Activated T-helper 1 cell treated with anti-CD3 and anti-CD28 coated beads, Interleukin-12 subunit alpha, Interleukin-12 subunit beta, Interleukin-2, Interleukin-4 antibody, amounts not matched to agents 30 ng/mL and 10 ng/mL and 1 ng/mL, durations not matched to agents 14 hours and 24 hours and 36 hours (primary cell): ENCODE measurements at regions of chr18 and their contacts with region 1.

Region 1: GRCh38 chr18:36015629-36016028 is 43.1 kb downstream of the RMP24 start:
- DNase-seq: no peak
- H3K4me3 Mint-ChIP-seq: no peak overlapping the region
- H3K27ac Mint-ChIP-seq: no peak overlapping the region
- H3K4me1 Mint-ChIP-seq: no peaks in the 10 kb centered on the region
- H3K27me3 Mint-ChIP-seq: no peaks in the 10 kb centered on the region

Region 2: GRCh38 chr18:35526476-35527120 is 489.0 kb before region 1 on chr18:
- intact Hi-C with region 1: no loop called
- DNase-seq: no peak
- H3K4me3 Mint-ChIP-seq: no peak overlapping the region
- H3K27ac Mint-ChIP-seq: no peak overlapping the region
- H3K4me1 Mint-ChIP-seq: peaks cover 11% of the 10 kb centered on the region
- H3K27me3 Mint-ChIP-seq: peaks cover 6% of the 10 kb centered on the region

Region 3: DNA sequence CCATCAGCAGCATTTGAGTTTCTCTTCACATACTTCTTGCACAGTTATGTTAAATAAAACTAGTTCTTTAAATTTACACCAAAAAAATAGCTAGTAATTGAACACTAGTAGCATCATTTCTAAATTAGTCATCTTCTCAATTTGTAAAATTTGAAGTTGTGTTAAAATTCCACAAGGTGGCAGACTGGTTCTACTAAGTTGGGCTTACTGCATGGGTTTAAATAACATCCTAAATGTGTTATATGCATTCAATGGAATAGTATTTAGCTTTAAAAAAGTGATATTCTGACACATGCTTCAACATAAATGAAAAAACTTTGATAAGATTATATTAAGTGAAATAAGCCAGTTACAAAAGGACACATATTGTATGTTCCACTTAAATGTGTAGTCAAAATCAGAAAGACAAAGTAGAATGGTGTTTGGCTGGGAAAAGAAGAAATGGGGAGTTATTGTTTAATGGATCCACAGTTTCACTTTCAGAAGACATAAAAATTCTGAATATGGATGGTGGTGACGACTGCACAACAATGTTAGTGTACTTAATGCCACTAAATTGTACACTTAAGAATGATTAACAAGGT is 80.4 kb after region 1 on chr18:
- intact Hi-C with region 1: loop called (anchors 1 kb)
- DNase-seq: no peak
- H3K4me3 Mint-ChIP-seq: no peak overlapping the region
- H3K27ac Mint-ChIP-seq: no peak overlapping the region
- H3K4me1 Mint-ChIP-seq: peaks cover 7% of the 10 kb centered on the region
- H3K27me3 Mint-ChIP-seq: peaks cover 14% of the 10 kb centered on the region

Region 4: DNA sequence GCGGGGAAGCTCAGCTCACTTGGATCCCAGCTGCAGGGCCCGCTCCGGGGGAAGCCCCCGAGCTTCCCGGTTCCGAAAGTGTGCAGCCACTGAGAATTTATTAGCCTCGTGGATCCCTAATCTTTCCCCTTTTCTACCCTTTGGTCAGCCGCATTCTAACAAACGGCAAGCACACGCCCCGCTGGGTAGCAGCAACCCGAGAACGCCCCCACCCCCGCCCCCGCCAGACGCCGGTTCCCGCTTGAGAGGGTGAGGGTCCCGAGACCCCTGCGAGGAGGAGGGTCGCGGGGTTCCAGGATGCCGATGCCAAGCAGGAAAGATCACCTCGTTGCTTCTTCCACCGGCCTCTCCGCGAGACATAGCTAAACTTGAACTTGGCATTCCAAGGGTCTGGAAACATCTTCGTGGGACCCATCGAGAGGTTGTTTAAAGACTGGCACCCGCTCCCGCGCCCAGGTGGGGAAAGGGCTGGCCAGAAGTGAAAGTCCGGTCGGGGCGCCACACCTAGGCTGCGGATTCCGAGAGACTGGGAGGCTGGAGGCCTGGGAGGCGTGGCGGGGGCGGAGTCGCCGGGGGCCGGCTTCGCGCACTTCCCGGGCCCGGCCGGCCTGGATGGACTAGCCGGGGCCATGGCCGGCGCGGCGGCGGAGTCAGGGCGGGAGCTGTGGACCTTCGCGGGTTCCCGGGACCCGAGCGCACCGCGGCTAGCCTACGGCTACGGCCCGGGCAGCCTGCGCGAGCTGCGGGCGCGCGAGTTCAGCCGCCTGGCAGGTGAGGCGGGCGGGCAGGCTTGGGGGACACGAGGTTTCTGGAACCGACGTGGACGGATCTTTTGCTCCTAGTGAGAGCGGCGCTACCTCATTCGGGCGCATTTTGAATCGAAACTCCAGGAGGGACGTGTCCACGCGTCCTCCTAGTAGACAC is 171.5 kb after region 1 on chr18 and contains the start of gene MOCOS:
- intact Hi-C with region 1: loop called (anchors 5 kb)
- DNase-seq: peak; percentile 43
- H3K4me3 Mint-ChIP-seq: peak within 1 kb of the TSS; percentile 82
- H3K27ac Mint-ChIP-seq: no peak within 1 kb of the TSS
- H3K4me1 Mint-ChIP-seq: peaks cover 7% of the 10 kb centered on the region
- H3K27me3 Mint-ChIP-seq: peaks cover 20% of the 10 kb centered on the region
- total RNA-seq, gene MOCOS: 0.17 and 0.47 TPM in 2 replicates

Region 5: DNA sequence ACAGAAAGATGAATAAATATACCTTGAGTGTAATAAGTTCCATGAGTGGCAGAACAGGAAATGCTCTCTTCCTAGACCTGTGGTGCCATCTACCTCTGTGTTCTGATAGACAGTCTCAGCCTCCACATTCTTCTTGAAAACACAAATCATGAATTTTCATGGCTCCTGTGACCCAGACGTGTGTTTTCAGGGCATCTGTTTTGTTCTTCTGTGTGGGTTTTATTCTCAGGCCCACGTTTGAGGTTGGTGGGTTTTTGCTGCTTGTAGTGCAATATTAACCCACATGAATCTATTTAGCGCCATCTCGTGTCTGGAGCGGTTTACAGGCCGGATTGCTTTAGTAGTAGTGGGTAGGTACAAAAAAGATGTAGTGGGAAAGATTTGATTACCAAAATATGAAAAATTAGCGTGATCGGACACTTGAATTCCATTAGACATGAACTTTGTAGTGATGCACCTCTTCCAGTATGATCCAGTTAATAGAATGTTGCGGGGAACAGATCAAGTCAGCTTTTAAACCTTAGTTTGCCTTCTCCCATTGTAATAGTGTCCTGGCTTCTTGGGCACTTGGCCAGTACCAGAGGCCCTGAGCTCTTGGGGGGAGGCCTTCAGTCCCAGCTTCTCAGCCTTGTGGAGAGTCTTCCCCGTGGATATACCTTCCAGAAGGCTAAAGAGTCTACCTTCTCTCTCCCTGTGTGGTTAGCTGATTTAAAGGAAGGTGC is 556.7 kb after region 1 on chr18:
- intact Hi-C with region 1: loop called (anchors 1 kb)
- DNase-seq: no peak
- H3K4me3 Mint-ChIP-seq: no peak overlapping the region
- H3K27ac Mint-ChIP-seq: no peak overlapping the region
- H3K4me1 Mint-ChIP-seq: no peaks in the 10 kb centered on the region
- H3K27me3 Mint-ChIP-seq: peaks cover 16% of the 10 kb centered on the region